Lower leg skin (tissue), 4 donors: ENCODE measurements at regions of chr7 and their contacts with region 1.

Region 1: DNA sequence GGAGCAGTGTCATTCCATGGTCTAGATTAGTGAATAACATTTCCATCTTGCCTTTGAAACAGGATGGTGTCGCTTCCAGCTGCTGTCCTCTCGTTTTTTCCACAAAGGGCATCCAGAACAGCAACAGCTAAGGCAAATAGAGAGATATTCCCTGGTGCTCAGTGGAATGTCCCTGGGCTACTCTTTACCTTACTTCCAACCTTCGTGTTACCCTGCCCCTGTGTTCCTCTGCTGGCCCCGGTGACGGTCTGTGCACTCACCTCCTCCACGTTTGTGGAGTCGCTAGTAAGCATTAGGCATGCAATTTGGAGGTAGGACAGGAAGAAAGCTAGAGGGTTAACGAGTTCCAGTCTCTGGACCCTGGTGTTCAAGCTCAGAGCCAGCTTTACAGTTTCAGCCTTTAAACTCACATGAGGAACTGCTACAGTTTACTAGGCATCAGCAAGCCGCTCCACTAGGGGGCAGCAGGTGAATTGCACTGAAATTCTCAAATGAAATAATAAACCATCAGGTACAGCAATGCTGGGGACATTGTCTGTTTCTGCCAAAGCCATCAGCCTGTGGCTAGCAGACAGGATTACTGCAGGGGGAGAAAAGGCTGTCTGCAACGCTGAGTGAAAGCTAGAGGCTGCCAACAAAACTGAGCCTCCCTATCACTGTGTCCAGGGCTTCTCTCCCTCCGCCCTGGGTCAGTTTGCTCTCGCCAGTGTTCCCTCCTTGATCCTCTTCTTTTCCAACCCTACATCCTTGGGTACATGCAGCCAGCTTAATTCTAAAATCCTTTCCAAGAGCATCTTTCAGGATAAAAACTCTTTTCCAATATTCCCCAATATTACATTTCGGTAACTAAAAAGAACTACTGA is 9.0 kb downstream of the MRPL32 start:
- DNase-seq: peak; percentile 78 to 93
- H3K4me3 ChIP-seq: no peak overlapping the region
- CTCF ChIP-seq: peak in 1 of 3 donors; percentile 46
- POLR2A ChIP-seq: no peak

Region 2: GRCh38 chr7:42567051-42567450 is 374.2 kb before region 1 on chr7:
- intact Hi-C with region 1: no loop called
- DNase-seq: no peak
- H3K4me3 ChIP-seq: no peak overlapping the region
- CTCF ChIP-seq: no peak
- POLR2A ChIP-seq: no peak

Region 3: GRCh38 chr7:42886129-42886528 is 55.1 kb before region 1 on chr7:
- intact Hi-C with region 1: no loop called
- DNase-seq: no peak
- H3K4me3 ChIP-seq: no peak overlapping the region
- CTCF ChIP-seq: no peak
- POLR2A ChIP-seq: no peak

Region 4: DNA sequence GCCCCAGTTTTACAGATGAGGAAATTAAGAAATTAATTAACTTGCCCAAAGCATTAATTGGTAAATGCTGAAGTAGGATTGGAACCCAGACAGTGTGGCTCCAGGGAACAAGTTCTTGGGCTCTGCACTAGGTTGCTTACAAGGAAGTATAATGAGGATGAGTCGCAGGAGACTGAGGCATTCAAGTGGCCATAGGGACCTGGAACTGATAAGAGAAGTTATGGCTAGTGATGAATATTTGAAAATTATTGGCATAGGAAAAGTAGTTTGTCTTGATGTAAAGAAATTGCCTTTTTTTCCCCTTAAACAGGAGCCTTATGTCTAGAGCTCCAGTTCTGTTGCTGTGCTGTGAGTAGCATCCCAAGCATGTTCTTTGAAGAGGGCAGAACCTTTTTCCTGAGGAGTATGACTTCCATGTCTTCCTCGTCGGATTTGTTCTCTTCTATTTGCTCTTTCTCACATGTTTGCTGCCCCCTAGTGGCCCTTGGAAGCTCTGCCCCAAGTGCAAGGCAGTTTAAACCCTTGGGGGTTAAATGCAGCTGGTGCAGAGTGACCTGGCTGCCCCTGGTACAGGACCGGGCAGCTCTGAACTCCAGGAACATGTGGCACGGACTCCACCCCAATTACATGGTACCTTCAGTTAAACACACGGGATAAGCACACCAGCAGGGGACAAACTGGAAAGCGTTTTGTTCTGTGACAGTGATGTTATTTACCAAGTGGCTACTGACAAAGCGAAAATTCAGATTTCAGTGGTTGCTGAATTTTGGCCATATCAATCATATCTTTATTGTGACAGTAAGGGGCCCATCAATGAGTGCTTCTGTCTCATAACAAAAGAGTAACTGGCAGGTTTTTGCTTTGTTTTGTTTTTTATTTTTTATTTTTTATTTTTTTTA is 320.0 kb after region 1 on chr7:
- intact Hi-C with region 1: loop called (anchors 5 kb)
- DNase-seq: peak; percentile 41 to 86
- H3K4me3 ChIP-seq: no peak overlapping the region
- CTCF ChIP-seq: no peak
- POLR2A ChIP-seq: no peak